ENCODE measurements at regions of chr1 and their contacts with region 1.

Region 1: DNA sequence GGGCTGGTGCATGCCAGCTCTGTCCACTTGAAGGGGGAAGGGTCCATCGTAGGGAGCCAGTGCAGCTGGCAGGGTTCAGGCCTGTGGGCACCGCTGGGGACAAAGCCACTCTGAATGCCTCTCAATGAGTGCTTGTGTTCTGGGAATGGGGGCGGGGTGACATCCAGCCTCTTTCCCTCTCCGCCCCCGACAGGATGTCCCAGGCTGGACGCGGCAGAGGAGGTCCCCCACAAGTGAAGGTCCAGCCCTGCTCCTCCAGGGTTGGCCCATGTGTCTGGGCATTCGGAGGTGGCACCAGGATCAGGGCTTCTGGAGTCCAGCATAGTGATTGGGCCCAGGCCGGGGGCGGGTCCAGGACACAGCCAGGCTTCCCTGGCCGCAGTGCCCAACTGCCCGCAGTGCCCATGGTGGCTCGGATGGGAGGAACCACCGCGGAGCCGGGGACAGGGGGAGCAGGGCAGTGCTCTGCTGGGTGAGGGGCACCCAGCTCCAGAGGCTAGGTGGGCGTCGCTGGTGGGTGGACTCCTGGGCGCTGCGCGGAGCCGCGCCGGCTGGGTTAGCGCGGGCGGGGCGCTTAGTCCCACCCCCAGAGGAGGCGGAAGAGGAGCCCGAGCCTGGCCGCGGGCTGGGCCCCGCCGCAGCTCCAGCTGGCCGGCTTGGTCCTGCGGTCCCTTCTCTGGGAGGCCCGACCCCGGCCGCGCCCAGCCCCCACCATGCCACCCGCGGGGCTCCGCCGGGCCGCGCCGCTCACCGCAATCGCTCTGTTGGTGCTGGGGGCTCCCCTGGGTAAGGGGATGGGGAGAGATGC is at the start of gene SHISA4:
- DNase-seq: peak; percentile 83 to 97 (median 94)
- H3K4me3 ChIP-seq: peak within 1 kb of the TSS; percentile 47 to 95 (median 86)
- H3K27ac ChIP-seq: peak within 1 kb of the TSS; percentile 60 to 99 (median 97)
- H3K27me3 ChIP-seq: no peaks in the 10 kb centered on the region
- CTCF ChIP-seq: peak in 25 of 56 donors; percentile 5 to 49 (median 17)
- total RNA-seq, gene SHISA4: 65.2 to 163 (median 110) TPM

Region 2: DNA sequence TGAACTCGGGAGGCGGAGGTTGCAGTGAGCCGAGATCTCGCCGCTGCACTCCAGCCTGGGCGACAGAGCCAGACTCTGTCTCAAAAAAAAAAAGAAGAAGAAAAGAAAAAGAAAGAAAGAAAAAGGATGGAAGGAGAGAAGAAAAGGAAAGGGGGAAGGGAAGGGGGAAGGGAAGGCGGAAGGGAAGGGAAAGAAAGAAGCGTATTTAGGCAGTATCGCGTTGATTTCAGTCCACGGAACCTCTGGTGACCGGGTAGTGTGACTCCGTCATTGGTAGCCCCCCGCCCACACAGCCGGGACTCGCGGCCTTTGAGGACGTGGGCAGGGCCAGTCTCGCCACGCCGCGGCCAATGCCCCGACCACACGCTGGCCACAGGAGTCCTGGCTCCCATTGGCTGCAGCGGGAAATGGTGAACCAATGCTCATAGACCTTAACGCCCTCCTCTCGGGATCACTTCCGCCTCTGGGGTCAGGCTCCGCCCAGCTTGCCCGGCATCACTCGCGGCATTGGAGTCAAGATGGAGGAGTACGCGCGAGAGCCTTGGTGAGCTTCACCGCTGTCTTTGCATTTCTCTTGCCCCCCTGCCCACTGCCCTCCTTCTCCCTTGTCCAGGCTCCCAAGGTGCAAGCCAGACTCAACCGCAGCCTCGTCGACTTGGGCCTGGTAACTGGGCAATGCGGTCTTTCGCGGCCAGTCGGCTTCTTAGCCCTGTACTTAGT is 66.7 kb after region 1 on chr1 and contains the start of gene TIMM17A:
- intact Hi-C with region 1: loop called (anchors 2 to 5 kb)
- DNase-seq: peak; percentile 93 to 98 (median 98)
- H3K4me3 ChIP-seq: peak within 1 kb of the TSS; percentile 54 to 100 (median 93)
- H3K27ac ChIP-seq: peak within 1 kb of the TSS in 57 of 59 donors; percentile 26 to 92 (median 83)
- H3K27me3 ChIP-seq: no peaks in the 10 kb centered on the region
- CTCF ChIP-seq: peak in 40 of 56 donors; percentile 7 to 56 (median 34)
- total RNA-seq, gene TIMM17A: 24.0 to 84.7 (median 54.1) TPM

Region 3: DNA sequence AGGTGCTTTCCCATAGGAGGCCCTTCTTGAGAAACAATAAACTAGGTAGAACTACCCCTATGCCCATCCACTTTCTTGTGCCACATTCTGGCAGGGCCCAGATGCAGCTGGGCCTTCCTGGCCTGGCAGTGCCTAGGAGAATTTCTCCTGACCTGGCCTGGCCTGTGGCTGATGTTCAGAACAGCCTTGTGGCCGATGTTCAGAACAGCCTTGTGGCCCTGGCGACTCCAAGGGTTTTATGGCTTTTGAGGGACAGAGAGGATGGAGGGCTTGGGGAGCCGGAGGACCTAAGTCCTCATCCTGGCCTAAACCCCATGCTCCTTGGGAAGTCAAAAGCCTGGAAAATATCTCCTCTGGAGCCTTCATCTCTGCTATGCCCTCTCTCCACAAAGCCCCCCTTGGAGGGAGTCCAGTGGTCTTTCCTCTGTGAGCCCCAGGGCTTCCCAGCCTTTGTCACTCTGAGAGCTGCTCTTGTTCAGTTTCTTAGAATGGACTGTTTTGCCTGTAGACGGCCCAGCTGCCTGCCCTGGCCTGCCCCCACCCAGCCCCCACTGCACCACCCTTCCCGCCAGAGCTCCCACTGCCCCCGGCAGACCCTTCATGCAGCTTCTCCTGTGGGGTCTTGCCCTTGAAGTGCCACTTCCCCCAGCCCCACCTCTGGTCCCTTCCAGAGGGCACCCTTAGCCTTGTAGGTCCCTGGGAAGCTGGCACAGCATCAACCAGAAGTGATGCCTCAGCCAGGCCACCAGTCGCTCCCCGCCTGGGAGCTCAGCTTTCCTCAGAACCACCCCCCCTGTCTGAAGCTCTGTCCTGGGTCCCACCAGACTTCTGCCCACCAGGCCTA is 241.2 kb after region 1 on chr1:
- intact Hi-C with region 1: loop called (anchors 5 kb)
- DNase-seq: peak in 2 of 10 donors; percentile 58 to 62
- H3K4me3 ChIP-seq: peak overlapping the region in 43 of 59 donors; percentile 0 to 61 (median 39)
- H3K27ac ChIP-seq: peak overlapping the region; percentile 71 to 99 (median 98)
- H3K27me3 ChIP-seq: no peaks in the 10 kb centered on the region
- CTCF ChIP-seq: peak in 4 of 56 donors; percentile 2 to 20 (median 8)